Activated CD4-positive, alpha-beta T cell treated with anti-CD3 and anti-CD28 coated beads for 36 hours (primary cell): ENCODE measurements at regions of chr1 and their contacts with region 1.

Region 1: GRCh38 chr1:154431586-154432373 is 26.6 kb downstream of the IL6R start:
- DNase-seq: peak; percentile 76
- ATAC-seq: peak; percentile 83
- H3K4me3 Mint-ChIP-seq: no peak overlapping the region
- H3K27ac Mint-ChIP-seq: peak overlapping the region; percentile 58
- H3K4me1 Mint-ChIP-seq: peaks cover 56% of the 10 kb centered on the region
- H3K27me3 Mint-ChIP-seq: no peaks in the 10 kb centered on the region

Region 2: GRCh38 chr1:154419620-154420571 is 11.9 kb before region 1 on chr1:
- CTCF ChIA-PET with region 1: interaction called, 4 read pairs
- POLR2A ChIA-PET with region 1: interaction called, 3 read pairs
- intact Hi-C with region 1: loop called in 1 of 2 experiments (anchors 2 kb)
- DNase-seq: peak; percentile 80
- ATAC-seq: peak; percentile 78
- H3K4me3 Mint-ChIP-seq: peak overlapping the region; percentile 61
- H3K27ac Mint-ChIP-seq: peak overlapping the region; percentile 92
- H3K4me1 Mint-ChIP-seq: peaks cover 89% of the 10 kb centered on the region
- H3K27me3 Mint-ChIP-seq: no peaks in the 10 kb centered on the region

Region 3: DNA sequence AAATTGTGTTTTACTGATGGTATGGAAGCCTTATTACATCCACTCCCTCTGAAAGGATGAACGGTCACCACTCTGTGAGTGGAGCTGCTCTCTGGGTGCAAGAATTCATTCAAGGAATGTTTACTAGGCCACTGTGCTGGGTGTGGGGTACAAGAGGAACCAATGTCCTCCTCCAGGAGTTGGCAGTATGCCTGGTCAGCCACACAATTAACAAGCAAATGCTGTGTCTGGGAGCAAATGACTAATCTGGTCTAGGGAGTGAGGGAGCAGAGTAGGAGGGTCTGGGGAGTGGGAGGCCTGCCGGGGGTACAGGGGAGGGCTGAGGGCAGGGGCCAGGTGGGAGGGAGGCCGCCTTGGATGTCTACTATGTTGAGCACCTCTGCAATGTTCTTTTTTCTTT is 43.0 kb after region 1 on chr1:
- CTCF ChIA-PET with region 1: no interaction called
- POLR2A ChIA-PET with region 1: no interaction called
- intact Hi-C with region 1: no loop called
- DNase-seq: no peak
- ATAC-seq: no peak
- H3K4me3 Mint-ChIP-seq: no peak overlapping the region
- H3K27ac Mint-ChIP-seq: no peak overlapping the region
- H3K4me1 Mint-ChIP-seq: peaks cover 25% of the 10 kb centered on the region
- H3K27me3 Mint-ChIP-seq: no peaks in the 10 kb centered on the region